PC-3 (cell line): ENCODE measurements at regions of chr9 and their contacts with region 1.

Region 1: DNA sequence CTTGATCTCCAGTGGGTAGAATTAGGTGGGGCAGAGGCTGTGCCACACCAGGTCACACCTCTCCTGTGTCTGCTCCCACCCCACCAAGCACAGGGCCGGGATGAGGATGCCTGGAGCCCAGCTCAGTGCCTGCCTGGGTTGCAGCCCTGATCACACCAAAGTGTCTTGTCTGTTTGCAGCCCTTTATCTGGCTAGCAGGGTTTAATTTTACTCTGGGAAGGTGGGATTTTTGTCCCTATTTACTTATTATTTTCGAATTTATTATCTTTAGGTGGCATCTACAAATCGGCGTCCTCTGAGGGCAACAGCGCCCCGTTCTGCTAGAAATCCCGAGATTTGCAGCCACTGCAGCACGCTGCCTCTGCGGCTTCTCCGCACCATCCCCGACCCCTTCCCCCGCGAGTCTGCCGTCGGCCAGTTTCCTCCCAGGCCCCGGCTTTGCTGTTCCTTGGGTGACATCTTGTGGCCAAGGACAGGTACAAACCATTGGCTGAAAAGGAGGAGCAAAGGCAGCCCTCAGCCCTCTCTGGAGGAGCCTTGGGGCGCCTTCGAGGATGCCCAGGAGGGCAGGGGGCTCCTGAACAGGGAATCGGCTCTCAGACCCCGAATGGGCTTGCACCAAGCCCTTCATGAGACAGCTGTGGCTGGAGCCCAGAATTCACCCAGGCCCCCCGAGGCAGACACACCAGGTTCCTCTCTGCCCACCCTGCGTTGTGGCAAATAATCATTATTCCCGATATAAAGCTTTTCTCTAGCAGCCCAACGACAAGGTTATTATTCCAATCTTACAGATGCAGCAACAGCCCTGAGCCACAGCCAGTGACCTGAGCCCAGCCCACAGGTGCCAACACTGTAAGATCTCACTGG is 113.0 kb downstream of the GAPVD1 start:
- DNase-seq: peak; percentile 66
- ATAC-seq: peak; percentile 80
- H3K4me3 ChIP-seq: peak overlapping the region; percentile 59
- H3K27ac ChIP-seq: no peak overlapping the region
- H3K4me1 ChIP-seq: no peaks in the 10 kb centered on the region
- H3K27me3 ChIP-seq: no peaks in the 10 kb centered on the region
- CTCF ChIP-seq: peak; percentile 77

Region 2: DNA sequence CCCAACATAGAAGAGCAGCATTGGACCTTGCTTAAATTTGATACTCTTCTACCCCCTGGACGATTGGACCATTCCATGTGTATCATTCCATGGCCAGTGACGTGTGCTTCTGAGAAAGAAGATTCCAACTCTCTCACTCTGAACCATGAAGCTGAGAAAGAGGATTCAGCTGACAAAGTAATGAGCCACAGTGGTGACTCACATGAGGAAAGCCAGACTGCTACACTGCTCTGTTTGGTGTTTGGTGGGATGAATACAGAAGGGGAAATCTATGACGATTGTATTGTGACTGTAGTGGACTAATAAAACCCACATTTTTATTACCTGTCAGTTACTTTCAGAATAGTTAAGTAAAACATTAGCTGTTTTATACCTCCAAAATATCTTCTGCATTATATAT is 141.0 kb before region 1 on chr9:
- CTCF ChIA-PET with region 1: no interaction called
- POLR2A ChIA-PET with region 1: no interaction called
- intact Hi-C with region 1: no loop called
- DNase-seq: peak; percentile 87
- ATAC-seq: peak; percentile 86
- H3K4me3 ChIP-seq: no peak overlapping the region
- H3K27ac ChIP-seq: peak overlapping the region; percentile 31
- H3K4me1 ChIP-seq: peaks cover 27% of the 10 kb centered on the region
- H3K27me3 ChIP-seq: no peaks in the 10 kb centered on the region
- CTCF ChIP-seq: no peak

Region 3: GRCh38 chr9:125255781-125256391 is 118.8 kb before region 1 on chr9:
- CTCF ChIA-PET with region 1: no interaction called
- POLR2A ChIA-PET with region 1: no interaction called
- intact Hi-C with region 1: loop called (anchors 1 kb)
- DNase-seq: peak; percentile 26
- ATAC-seq: no peak; the same call in 1 of the 2 replicates
- H3K4me3 ChIP-seq: no peak overlapping the region
- H3K27ac ChIP-seq: no peak overlapping the region
- H3K4me1 ChIP-seq: peaks cover 5% of the 10 kb centered on the region
- H3K27me3 ChIP-seq: no peaks in the 10 kb centered on the region
- CTCF ChIP-seq: no peak; the same call in 1 of the 2 replicates